T-cell (primary cell): ENCODE measurements at regions of chr1 and their contacts with region 1.

Region 1: DNA sequence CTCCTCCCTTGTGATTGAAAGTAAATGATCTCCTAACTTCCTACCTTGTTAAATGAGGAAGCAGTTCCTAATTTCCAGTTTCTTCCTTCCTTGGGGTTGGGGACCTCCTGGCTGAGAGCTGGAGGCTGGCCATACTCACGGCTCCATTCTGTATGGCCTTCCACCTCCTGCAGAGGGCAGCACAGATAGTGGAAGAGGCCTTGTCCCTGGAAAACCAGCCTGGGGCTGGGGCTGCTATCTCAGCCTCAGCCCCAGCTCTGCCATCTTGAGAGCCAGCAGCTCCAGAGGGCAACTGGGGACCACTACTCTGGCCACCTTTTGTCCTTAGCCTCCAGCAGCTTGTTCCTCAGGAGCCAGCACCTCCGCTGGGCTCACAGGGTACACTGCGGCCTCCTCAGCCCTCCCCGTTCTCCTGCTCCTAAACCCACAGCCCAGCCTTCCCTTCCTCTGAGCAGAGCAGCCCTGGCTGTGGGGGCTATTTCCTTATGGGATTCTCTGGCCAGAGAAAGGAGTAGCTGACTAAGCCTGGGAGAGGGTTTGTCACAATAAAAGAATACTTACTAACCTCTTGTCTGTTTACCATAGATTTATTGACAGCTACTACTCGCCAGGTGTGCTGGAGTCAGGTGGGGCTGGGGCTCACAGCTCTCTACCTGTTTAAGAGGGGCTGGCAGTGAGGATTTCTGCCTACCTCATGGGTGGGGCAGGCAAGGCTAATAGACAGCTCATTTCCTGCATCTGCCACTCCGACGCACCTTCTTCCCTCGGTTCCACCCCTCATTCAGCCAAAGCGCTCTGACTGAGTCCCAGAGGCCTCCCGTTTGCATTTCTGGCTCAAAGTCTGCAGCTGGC is 6.3 kb downstream of the TMEM234 start:
- DNase-seq: peak in 31 of 35 experiments; percentile 9 to 74 (median 44)
- ATAC-seq: peak; percentile 82 to 92 (median 84)
- H3K4me3 ChIP-seq: peak overlapping the region in 1 of 2 donors; percentile 1
- H3K4me3 Mint-ChIP-seq: peak overlapping the region in 1 of 3 donors; percentile 27
- H3K27ac ChIP-seq: peak overlapping the region; percentile 15
- H3K27ac Mint-ChIP-seq: peak overlapping the region; percentile 58 to 71
- H3K4me1 ChIP-seq: peaks cover 8 to 19% of the 10 kb centered on the region in 2 experiments
- H3K4me1 Mint-ChIP-seq: peaks cover 18 to 27% (median 23%) of the 10 kb centered on the region in 3 donors
- H3K27me3 ChIP-seq: no peaks in the 10 kb centered on the region
- H3K27me3 Mint-ChIP-seq: no peaks in the 10 kb centered on the region

Region 2: DNA sequence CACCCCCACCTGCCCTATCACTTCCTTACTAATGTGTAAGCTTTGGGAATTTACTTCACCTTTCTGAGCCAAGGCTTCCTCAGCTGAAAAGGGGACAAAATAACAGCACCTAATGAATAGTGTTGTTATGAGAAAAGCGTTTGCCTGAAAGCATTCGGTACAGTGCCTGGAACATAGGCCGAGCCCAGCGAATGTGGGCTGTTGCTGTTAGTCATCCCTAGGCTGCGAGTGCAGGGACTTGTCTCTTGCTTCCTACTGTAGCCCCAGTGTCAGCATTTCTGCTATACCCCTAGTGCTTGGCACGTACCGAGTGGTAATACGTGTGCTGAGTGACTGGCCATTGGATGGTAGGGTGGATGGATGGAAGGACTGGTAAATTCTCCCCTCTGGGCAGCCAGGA is 124.7 kb before region 1 on chr1:
- CTCF ChIA-PET with region 1: interaction called in 1 of 2 experiments, 3 read pairs
- POLR2A ChIA-PET with region 1: interaction called in 1 of 2 experiments, 15 read pairs
- DNase-seq: no peak
- ATAC-seq: no peak
- H3K4me3 ChIP-seq: no peak overlapping the region
- H3K4me3 Mint-ChIP-seq: no peak overlapping the region
- H3K27ac ChIP-seq: no peak overlapping the region
- H3K27ac Mint-ChIP-seq: no peak overlapping the region
- H3K4me1 ChIP-seq: no peaks in the 10 kb centered on the region
- H3K4me1 Mint-ChIP-seq: no peaks in the 10 kb centered on the region
- H3K27me3 ChIP-seq: no peaks in the 10 kb centered on the region
- H3K27me3 Mint-ChIP-seq: no peaks in the 10 kb centered on the region

Region 3: DNA sequence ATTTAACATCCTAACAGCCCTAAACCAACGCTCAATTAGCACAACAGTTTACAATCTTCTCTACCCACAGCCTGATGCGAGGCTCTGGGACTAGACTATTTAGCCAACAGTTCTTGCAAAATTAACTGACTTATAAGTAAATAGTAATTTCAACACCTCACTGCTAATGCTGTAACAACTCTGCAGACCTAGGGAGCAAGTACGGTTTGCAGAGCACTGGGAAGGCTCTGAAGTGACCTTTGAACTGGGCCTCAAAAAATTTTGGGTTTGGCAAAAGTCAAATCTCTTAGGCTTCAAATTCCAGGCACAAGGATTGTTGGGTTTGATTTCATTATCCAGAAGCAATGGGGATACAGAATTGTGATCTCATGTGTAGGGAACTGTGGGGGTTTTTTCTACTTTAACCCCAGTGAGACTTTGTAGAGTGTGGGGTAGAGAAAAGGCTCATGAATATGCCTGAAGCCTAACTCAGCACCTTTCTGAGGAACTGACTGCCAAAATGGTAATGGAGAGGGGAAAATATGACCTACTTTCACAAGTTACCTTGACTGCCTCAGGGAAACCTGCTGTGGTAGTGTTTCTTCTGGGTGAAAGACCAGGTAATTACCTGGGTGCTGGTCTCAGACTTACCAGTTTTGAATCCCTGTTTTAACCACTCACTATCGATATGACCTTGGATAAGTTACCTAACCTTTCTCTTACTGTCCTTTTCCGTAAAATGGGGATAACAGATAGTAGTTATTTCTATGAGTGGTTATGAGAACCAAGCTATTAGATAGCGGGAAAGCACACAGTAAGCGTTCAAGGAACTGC is 37.3 kb before region 1 on chr1:
- CTCF ChIA-PET with region 1: no interaction called
- POLR2A ChIA-PET with region 1: no interaction called
- DNase-seq: no peak
- ATAC-seq: no peak
- H3K4me3 ChIP-seq: peak overlapping the region in 1 of 2 donors; percentile 91
- H3K4me3 Mint-ChIP-seq: peak overlapping the region; percentile 87 to 93 (median 90)
- H3K27ac ChIP-seq: peak overlapping the region; percentile 65
- H3K27ac Mint-ChIP-seq: peak overlapping the region; percentile 94 to 95
- H3K4me1 ChIP-seq: peaks cover 7 to 35% of the 10 kb centered on the region in 2 experiments
- H3K4me1 Mint-ChIP-seq: peaks cover 31 to 37% (median 32%) of the 10 kb centered on the region in 3 donors
- H3K27me3 ChIP-seq: no peaks in the 10 kb centered on the region
- H3K27me3 Mint-ChIP-seq: no peaks in the 10 kb centered on the region

Region 4: GRCh38 chr1:32286763-32287162 is 70.9 kb after region 1 on chr1:
- CTCF ChIA-PET with region 1: interaction called, 11 to 17 read pairs
- POLR2A ChIA-PET with region 1: interaction called in 1 of 2 experiments, 9 read pairs
- DNase-seq: no peak
- ATAC-seq: no peak
- H3K4me3 ChIP-seq: no peak overlapping the region
- H3K4me3 Mint-ChIP-seq: no peak overlapping the region
- H3K27ac ChIP-seq: no peak overlapping the region
- H3K27ac Mint-ChIP-seq: peak overlapping the region; percentile 74 to 78
- H3K4me1 ChIP-seq: peaks cover 7 to 18% of the 10 kb centered on the region in 2 experiments
- H3K4me1 Mint-ChIP-seq: peaks cover 14 to 18% (median 16%) of the 10 kb centered on the region in 3 donors
- H3K27me3 ChIP-seq: no peaks in the 10 kb centered on the region
- H3K27me3 Mint-ChIP-seq: no peaks in the 10 kb centered on the region

Region 5: GRCh38 chr1:32291708-32292492 is 76.0 kb after region 1 on chr1 and contains the start of gene HDAC1:
- CTCF ChIA-PET with region 1: interaction called, 4 to 11 read pairs
- POLR2A ChIA-PET with region 1: interaction called in 1 of 2 experiments, 6 read pairs
- DNase-seq: peak; percentile 90 to 97 (median 95)
- ATAC-seq: peak; percentile 96 to 97 (median 97)
- H3K4me3 ChIP-seq: peak within 1 kb of the TSS; percentile 72 to 84
- H3K4me3 Mint-ChIP-seq: peak within 1 kb of the TSS; percentile 95 to 99 (median 98)
- H3K27ac ChIP-seq: peak within 1 kb of the TSS; percentile 88
- H3K27ac Mint-ChIP-seq: peak within 1 kb of the TSS; percentile 97 to 98
- H3K4me1 ChIP-seq: peaks cover 24 to 61% of the 10 kb centered on the region in 2 experiments
- H3K4me1 Mint-ChIP-seq: peaks cover 45 to 62% (median 55%) of the 10 kb centered on the region in 3 donors
- H3K27me3 ChIP-seq: no peaks in the 10 kb centered on the region
- H3K27me3 Mint-ChIP-seq: no peaks in the 10 kb centered on the region
- total RNA-seq, gene HDAC1: 117 to 153 (median 142) TPM

Region 6: GRCh38 chr1:32321712-32322291 is 105.9 kb after region 1 on chr1:
- CTCF ChIA-PET with region 1: interaction called, 10 to 11 read pairs
- POLR2A ChIA-PET with region 1: interaction called in 1 of 2 experiments, 4 read pairs
- DNase-seq: peak in 23 of 35 experiments; percentile 8 to 68 (median 29)
- ATAC-seq: peak; percentile 86 to 90 (median 88)
- H3K4me3 ChIP-seq: peak overlapping the region; percentile 10 to 46
- H3K4me3 Mint-ChIP-seq: peak overlapping the region; percentile 64 to 78 (median 67)
- H3K27ac ChIP-seq: peak overlapping the region; percentile 61
- H3K27ac Mint-ChIP-seq: peak overlapping the region; percentile 96
- H3K4me1 ChIP-seq: peaks cover 29 to 58% of the 10 kb centered on the region in 2 experiments
- H3K4me1 Mint-ChIP-seq: peaks cover 44 to 59% (median 44%) of the 10 kb centered on the region in 3 donors
- H3K27me3 ChIP-seq: no peaks in the 10 kb centered on the region
- H3K27me3 Mint-ChIP-seq: no peaks in the 10 kb centered on the region